ENCODE measurements at regions of chr10 and their contacts with region 1.

Region 1: DNA sequence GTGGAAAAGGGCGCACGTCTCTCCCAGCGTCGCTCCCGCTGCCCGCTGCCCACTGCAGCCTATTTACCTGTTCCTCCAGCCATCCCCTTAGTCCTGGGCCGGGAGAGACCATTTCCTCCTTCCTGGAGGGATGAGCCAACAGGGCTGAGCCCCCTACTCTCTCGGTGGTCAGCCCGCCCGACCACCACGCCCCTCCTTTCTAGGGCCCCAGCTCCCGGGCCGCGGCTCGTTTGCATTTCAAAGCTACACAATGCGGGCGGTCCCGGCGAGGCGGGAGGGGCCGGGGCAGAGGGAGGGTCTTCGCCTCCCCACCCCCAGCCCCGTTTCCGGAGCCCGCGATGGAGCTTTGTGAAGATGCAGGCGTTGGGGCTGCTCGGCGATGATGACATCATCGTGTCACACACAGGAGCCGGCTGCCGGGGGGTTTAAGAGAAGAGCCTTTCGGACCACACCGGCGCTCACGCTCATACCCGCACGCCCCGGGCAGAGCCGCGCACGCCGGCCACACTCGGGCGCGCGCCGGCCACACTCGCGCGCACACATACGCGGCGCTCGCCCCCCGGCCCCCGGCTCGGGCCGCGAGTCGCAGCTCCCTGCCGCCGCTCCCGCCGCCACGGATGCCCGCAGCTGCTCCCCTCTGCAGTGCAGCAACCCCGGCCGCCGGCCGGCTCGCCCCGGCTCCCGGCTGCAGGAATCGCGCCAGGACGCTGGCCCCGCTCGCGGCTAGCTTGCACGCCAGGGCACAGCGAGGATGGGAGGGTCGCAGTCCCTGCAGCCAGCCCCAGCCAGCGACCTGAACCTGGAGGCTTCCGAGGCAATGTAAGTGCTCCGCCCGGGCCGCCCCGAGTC is 107.7 kb upstream of the BTBD16 start:
- DNase-seq: peak; percentile 84 to 91
- H3K4me3 ChIP-seq: peak overlapping the region; percentile 73 to 87 (median 84)
- H3K27ac ChIP-seq: peak overlapping the region; percentile 84
- H3K4me1 ChIP-seq: peaks cover 11 to 47% (median 28%) of the 10 kb centered on the region in 4 experiments
- H3K27me3 ChIP-seq: peaks cover 0 to 2% (median 0%) of the 10 kb centered on the region in 4 experiments; a peak in 1 of 7 replicates
- CTCF ChIP-seq: no peak
- EP300 ChIP-seq: peak; percentile 71 to 99
- POLR2A ChIP-seq: peak; percentile 87 to 90
- RAD21 ChIP-seq: no peak

Region 2: GRCh38 chr10:122072491-122072890 is 90.9 kb before region 1 on chr10:
- CTCF ChIA-PET with region 1: no interaction called
- POLR2A ChIA-PET with region 1: no interaction called
- DNase-seq: no peak
- H3K4me3 ChIP-seq: no peak overlapping the region
- H3K27ac ChIP-seq: no peak overlapping the region
- H3K4me1 ChIP-seq: no peaks in the 10 kb centered on the region
- H3K27me3 ChIP-seq: no peaks in the 10 kb centered on the region
- CTCF ChIP-seq: no peak
- EP300 ChIP-seq: no peak
- POLR2A ChIP-seq: no peak
- RAD21 ChIP-seq: no peak

Region 3: DNA sequence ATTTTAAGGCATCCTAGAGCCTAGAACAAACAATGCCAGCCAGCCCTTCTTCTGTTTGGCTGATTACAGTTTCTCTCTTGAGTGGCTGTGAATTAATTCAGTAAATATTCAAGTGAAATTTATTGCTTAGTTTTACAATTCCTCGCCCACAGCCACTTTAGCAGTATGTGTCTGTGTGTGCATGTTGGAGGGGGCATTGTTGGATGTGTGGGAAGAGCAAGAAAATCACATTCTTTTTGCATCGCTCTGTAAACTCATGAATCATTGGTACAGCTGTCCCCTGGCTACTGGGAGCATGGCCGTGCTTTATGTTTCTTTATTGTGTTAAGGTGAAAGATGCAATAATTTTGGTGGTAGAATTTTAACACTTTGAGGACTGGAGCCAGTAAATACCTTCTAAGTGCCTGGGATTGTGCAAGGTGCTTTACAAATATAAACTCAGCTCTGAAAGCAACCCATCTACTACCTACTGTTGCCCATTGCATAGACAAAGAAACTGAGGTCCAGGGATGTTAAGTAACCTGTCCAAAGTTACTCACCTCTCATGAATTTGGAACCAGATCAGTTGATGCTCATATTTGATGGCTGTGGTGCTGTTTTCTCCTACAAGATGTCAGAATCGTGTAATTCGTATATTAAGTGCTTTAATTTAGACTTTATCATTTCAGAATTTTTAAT is 17.8 kb after region 1 on chr10:
- CTCF ChIA-PET with region 1: interaction called, 16 read pairs
- POLR2A ChIA-PET with region 1: interaction called, 237 read pairs
- DNase-seq: no peak
- H3K4me3 ChIP-seq: peak overlapping the region in 1 of 4 experiments; percentile 17; a peak in 2 of 8 replicates
- H3K27ac ChIP-seq: 0 out of 2 replicates have a peak overlapping the region, but pooled peaks have one; percentile 32
- H3K4me1 ChIP-seq: peaks cover 20 to 53% (median 37%) of the 10 kb centered on the region in 4 experiments
- H3K27me3 ChIP-seq: no peaks in the 10 kb centered on the region
- CTCF ChIP-seq: no peak
- EP300 ChIP-seq: no peak
- POLR2A ChIP-seq: no peak
- RAD21 ChIP-seq: no peak

Region 4: GRCh38 chr10:122191936-122192541 is 28.6 kb after region 1 on chr10:
- CTCF ChIA-PET with region 1: interaction called, 10 read pairs
- POLR2A ChIA-PET with region 1: interaction called, 237 read pairs
- DNase-seq: no peak
- H3K4me3 ChIP-seq: no peak overlapping the region
- H3K27ac ChIP-seq: 0 out of 2 replicates have a peak overlapping the region, but pooled peaks have one; percentile 16
- H3K4me1 ChIP-seq: peaks cover 9 to 15% (median 12%) of the 10 kb centered on the region in 4 experiments
- H3K27me3 ChIP-seq: no peaks in the 10 kb centered on the region
- CTCF ChIP-seq: no peak
- EP300 ChIP-seq: no peak
- POLR2A ChIP-seq: no peak
- RAD21 ChIP-seq: no peak